ENCODE measurements at regions of chr9 and their contacts with region 1.

Region 1: DNA sequence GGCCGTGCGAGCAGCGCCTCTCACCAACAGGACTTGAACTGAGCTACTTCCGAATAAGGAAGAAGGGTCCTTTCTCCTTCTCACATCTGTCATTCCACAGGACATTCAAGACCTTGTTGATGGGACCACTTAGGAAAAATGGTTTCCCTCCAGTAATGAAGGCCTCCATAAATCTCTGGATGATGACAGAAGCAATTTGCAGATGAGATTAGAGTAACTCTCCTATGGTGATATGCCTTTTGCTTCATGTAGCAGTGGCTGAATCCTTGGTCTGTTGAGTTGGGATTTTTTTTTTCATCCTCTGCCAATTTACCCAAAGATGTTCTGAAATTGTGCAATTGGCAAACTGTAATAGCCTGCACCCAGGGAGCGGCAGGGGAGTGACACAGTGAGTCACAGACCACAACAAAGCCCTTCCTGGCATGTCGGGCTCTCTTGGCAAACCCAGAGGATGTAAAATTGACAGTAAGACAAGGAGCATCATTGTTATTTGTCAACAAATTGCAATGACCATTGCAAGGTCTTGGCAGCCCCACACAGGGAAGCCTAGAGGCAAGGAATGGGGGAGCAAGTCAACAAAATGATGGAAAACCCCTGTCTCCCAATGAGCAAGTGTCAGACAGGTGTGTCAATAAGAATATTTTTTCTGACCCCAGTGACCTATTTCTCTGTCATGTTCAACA is 275.9 kb downstream of the ACTL7B start:
- DNase-seq: peak; percentile 79 to 89 (median 81)
- H3K4me3 ChIP-seq: no peak overlapping the region
- H3K4me3 Mint-ChIP-seq: peak overlapping the region in 1 of 2 donors; percentile 48
- H3K27ac ChIP-seq: peak overlapping the region in 1 of 2 donors; percentile 58
- H3K27ac Mint-ChIP-seq: peak overlapping the region in 6 of 7 donors; percentile 51 to 91 (median 80)
- H3K4me1 ChIP-seq: peaks cover 39 to 44% of the 10 kb centered on the region in 2 donors
- H3K4me1 Mint-ChIP-seq: peaks cover 49% of the 10 kb centered on the region
- H3K27me3 ChIP-seq: no peaks in the 10 kb centered on the region
- H3K27me3 Mint-ChIP-seq: no peaks in the 10 kb centered on the region
- CTCF ChIP-seq: no peak

Region 2: GRCh38 chr9:108621991-108622855 is 42.3 kb after region 1 on chr9:
- intact Hi-C with region 1: loop called in 1 of 2 experiments (anchors 5 kb)
- DNase-seq: peak; percentile 86 to 97 (median 90)
- H3K4me3 ChIP-seq: peak overlapping the region in 1 of 3 experiments; percentile 26
- H3K4me3 Mint-ChIP-seq: peak overlapping the region in 1 of 2 donors; percentile 67
- H3K27ac ChIP-seq: peak overlapping the region; percentile 55 to 87
- H3K27ac Mint-ChIP-seq: peak overlapping the region; percentile 91 to 97 (median 94)
- H3K4me1 ChIP-seq: peaks cover 47 to 50% of the 10 kb centered on the region in 2 donors
- H3K4me1 Mint-ChIP-seq: peaks cover 52% of the 10 kb centered on the region
- H3K27me3 ChIP-seq: no peaks in the 10 kb centered on the region
- H3K27me3 Mint-ChIP-seq: peaks cover 0 to 2% (median 2%) of the 10 kb centered on the region in 3 donors
- CTCF ChIP-seq: no peak